PC-9 (cell line): ENCODE measurements at regions of chr17 and their contacts with region 1.

Region 1: DNA sequence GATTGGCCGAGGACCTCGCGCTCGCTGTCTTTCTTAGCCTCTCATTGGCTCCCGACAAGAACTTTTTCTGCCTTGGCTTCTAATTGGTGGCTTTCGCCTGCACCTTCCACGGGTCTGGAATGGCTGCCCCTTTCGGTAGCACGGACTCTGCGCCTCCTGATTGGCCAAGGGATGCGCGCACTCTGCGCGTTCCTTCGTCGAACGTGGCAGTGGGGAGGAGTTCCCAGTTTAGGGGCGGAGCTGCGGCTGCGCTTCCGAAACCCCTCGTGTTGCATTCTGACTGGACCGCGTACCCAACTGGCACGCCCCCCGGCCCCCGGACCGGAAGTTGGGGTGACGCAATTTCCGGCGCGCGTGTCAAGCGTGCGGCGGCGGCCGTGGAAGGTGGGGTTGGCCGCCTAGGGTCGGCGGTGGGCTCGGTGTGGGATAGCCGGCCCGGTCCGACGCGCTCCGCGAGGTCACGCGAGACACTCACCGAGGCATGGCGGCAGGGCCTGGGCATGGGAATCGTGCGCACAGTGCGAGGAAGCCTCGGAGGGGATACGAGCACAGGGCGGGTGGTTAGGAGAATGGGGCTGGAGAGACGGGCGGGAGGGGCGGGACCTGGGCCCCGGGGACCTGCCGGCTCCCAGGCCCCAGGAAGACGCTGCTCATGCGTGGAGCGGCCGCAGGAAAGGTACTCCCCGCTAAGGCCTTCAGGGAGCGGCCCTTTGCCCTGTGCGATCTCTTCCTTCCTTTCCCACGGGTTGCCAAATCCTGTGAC is 602 bp upstream of the P4HB start:
- DNase-seq: peak; percentile 99
- H3K4me3 ChIP-seq: peak overlapping the region; percentile 86
- H3K27ac ChIP-seq: peak overlapping the region; percentile 80
- H3K4me1 ChIP-seq: no peaks in the 10 kb centered on the region
- H3K27me3 ChIP-seq: no peaks in the 10 kb centered on the region
- CTCF ChIP-seq: no peak

Region 2: DNA sequence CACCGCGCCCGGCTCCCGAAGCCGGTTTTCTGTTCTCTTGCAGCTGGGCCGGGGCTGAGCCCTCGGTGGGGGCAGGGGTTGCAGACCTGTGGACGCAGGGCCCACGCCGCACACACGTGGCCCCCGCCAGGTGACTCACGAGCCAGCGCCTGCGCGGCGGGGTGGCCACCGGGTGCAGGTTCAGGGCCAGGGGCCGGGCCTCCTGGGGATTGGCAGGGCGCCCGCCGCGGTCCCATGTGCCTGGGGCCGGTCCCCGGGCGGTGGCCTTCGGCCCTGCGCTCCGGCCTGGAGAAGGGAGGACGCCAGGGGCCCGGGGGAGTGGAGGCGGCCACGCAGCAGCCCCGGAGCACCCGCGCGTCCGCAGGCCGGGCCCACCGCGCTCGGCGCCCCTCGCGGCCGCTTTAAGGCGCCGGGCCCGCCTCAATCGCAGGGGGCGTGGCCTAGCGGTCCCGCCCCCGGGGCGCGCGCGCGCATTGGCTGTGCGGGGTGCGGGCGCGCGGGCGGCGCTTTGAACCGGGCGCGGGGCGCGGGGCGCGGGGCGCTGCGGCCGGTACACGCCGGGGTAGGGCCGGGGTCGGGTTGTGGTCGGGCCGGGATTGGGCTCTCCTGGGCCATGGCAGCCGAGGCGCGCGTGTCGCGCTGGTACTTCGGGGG is 149.0 kb before region 1 on chr17 and contains the start of gene SLC25A10:
- CTCF ChIA-PET with region 1: no interaction called
- POLR2A ChIA-PET with region 1: no interaction called
- intact Hi-C with region 1: loop called (anchors 2 kb)
- DNase-seq: peak; percentile 75 to 96
- H3K4me3 ChIP-seq: peak within 1 kb of the TSS; percentile 77
- H3K27ac ChIP-seq: peak within 1 kb of the TSS; percentile 50
- H3K4me1 ChIP-seq: peaks cover 24% of the 10 kb centered on the region
- H3K27me3 ChIP-seq: no peaks in the 10 kb centered on the region
- CTCF ChIP-seq: no peak
- total RNA-seq, gene SLC25A10: 83.6 and 86.5 TPM in 2 replicates

Region 3: GRCh38 chr17:81833160-81833920 is 27.6 kb before region 1 on chr17 and contains the start of gene MCRIP1:
- CTCF ChIA-PET with region 1: no interaction called
- POLR2A ChIA-PET with region 1: no interaction called
- intact Hi-C with region 1: loop called (anchors 1 kb)
- DNase-seq: peak; percentile 75 to 98
- H3K4me3 ChIP-seq: peak within 1 kb of the TSS; percentile 81
- H3K27ac ChIP-seq: peak within 1 kb of the TSS; percentile 68
- H3K4me1 ChIP-seq: no peaks in the 10 kb centered on the region
- H3K27me3 ChIP-seq: no peaks in the 10 kb centered on the region
- CTCF ChIP-seq: no peak
- total RNA-seq, gene MCRIP1: 53.8 and 84.0 TPM in 2 replicates

Region 4: GRCh38 chr17:81890447-81891299 is 29.7 kb after region 1 on chr17:
- CTCF ChIA-PET with region 1: interaction called, 3 read pairs
- POLR2A ChIA-PET with region 1: interaction called, 18 read pairs
- intact Hi-C with region 1: loop called (anchors 1 kb)
- DNase-seq: no peak
- H3K4me3 ChIP-seq: peak overlapping the region; percentile 66
- H3K27ac ChIP-seq: no peak overlapping the region
- H3K4me1 ChIP-seq: peaks cover 21% of the 10 kb centered on the region
- H3K27me3 ChIP-seq: no peaks in the 10 kb centered on the region
- CTCF ChIP-seq: no peak

Region 5: DNA sequence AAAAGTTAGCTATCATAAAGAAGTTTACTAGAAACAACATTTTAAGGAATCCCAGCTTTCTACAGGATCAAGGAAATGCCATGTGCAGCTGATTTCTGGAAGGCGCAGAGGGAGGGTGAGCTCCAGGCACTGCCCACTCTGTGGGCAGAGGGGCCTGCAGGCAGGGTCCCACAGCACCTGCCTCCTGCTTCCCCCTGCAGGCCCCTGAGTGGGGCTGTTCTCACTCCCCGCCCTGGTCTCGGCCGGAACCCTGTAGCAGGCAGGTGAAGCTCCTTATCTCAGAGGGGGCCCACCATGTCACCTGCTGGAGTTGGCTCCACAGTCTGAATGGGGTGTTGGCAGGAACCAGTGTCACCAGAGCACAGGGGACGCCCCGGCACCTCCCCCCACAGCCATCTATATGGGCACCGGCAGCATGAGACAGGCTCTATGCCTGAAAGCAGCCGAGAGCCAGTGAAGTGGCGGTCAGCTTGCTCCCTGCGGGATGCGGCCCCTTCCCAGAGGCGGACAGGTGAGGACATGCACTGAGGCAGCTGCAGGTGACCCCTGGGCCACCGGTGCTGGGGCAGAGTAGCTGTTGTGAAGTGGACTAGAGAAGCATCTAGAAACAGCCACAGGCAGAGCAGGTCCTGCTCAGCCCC is 284.7 kb after region 1 on chr17:
- CTCF ChIA-PET with region 1: no interaction called
- POLR2A ChIA-PET with region 1: interaction called, 10 read pairs
- intact Hi-C with region 1: no loop called
- DNase-seq: no peak
- H3K4me3 ChIP-seq: no peak overlapping the region
- H3K27ac ChIP-seq: no peak overlapping the region
- H3K4me1 ChIP-seq: no peaks in the 10 kb centered on the region
- H3K27me3 ChIP-seq: no peaks in the 10 kb centered on the region
- CTCF ChIP-seq: no peak

Region 6: DNA sequence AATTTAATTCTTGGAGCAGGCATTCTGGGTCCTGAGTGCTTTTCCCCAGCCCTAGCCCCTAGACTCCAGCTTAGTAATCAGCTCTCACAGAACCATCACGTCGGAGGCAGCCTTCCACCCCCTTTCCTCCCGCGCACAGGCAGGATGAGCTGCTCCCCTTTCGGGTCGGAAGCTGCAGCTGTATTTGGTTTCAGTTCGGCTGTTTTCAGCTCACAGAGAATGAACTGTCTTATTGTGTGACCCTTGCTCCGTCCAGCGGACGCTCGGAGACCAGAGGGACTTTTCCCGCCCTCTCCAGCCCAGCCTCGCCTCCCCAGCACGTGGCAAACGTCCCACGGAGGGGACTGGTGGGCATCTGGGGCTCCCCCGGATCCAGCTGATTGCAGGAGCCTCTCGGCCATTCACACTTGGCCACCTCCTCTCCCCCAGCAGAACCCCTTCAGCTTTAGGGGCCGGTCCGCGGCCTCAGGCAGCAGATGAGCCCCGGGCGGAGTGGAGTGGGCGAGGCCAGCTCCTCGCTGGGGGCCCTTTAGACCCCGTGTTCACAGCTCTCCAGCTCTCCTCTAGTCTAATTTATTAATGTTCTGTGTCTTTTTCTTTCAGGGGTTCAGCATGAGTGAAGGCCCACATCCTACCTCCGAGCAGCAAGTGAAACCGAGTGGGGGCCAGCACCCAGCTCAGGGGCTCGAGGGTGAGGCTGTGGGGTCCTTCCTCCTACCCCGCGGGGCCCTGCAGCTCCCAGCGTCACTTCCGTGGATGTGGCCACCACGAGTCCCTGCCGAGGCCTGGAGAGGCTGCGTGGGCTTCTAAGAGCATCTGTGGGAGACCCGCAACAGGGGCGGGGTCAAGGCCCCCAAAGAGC is 509.8 kb after region 1 on chr17:
- CTCF ChIA-PET with region 1: no interaction called
- POLR2A ChIA-PET with region 1: no interaction called
- intact Hi-C with region 1: no loop called
- DNase-seq: no peak
- H3K4me3 ChIP-seq: no peak overlapping the region
- H3K27ac ChIP-seq: no peak overlapping the region
- H3K4me1 ChIP-seq: no peaks in the 10 kb centered on the region
- H3K27me3 ChIP-seq: no peaks in the 10 kb centered on the region
- CTCF ChIP-seq: no peak